Right cardiac atrium (tissue), 5 donors: ENCODE measurements at regions of chr11 and their contacts with region 1.

Region 1: DNA sequence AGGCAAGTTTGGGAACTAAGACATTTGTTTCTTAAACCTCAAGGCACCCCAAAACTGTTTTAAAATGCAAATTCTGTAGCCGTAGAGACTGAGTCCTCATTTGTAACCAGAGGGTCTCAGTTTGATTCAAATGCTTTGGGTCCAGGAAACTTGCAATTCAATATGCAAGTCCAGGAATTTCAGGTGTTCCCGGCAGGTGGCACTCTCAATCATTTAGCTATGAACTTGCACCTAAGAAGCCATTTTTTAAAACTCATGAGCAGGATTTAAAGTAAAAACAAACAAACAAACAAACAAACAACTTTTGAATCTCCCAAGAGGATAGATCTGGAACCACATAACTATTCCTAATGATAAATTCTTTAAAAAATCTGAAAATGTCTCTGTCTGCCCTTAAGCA is 8.7 kb upstream of the ABTB2 start:
- DNase-seq: peak in 1 of 3 donors; percentile 26
- ATAC-seq: no peak
- H3K4me3 ChIP-seq: no peak overlapping the region
- H3K27ac ChIP-seq: no peak overlapping the region
- H3K4me1 ChIP-seq: no peaks in the 10 kb centered on the region
- H3K27me3 ChIP-seq: no peaks in the 10 kb centered on the region

Region 2: GRCh38 chr11:33857933-33858371 is 508.6 kb before region 1 on chr11:
- intact Hi-C with region 1: loop called in 1 of 4 experiments (anchors 10 kb)
- DNase-seq: peak; percentile 74 to 89 (median 87)
- ATAC-seq: peak; percentile 88 to 91
- H3K4me3 ChIP-seq: no peak overlapping the region
- H3K27ac ChIP-seq: no peak overlapping the region
- H3K4me1 ChIP-seq: no peaks in the 10 kb centered on the region
- H3K27me3 ChIP-seq: no peaks in the 10 kb centered on the region

Region 3: GRCh38 chr11:33996498-33997454 is 369.7 kb before region 1 on chr11:
- intact Hi-C with region 1: loop called in 1 of 4 experiments (anchors 5 kb)
- DNase-seq: peak; percentile 50 to 71 (median 53)
- ATAC-seq: peak; percentile 94 to 96
- H3K4me3 ChIP-seq: no peak overlapping the region
- H3K27ac ChIP-seq: no peak overlapping the region
- H3K4me1 ChIP-seq: peaks cover 2% of the 10 kb centered on the region
- H3K27me3 ChIP-seq: no peaks in the 10 kb centered on the region

Region 4: DNA sequence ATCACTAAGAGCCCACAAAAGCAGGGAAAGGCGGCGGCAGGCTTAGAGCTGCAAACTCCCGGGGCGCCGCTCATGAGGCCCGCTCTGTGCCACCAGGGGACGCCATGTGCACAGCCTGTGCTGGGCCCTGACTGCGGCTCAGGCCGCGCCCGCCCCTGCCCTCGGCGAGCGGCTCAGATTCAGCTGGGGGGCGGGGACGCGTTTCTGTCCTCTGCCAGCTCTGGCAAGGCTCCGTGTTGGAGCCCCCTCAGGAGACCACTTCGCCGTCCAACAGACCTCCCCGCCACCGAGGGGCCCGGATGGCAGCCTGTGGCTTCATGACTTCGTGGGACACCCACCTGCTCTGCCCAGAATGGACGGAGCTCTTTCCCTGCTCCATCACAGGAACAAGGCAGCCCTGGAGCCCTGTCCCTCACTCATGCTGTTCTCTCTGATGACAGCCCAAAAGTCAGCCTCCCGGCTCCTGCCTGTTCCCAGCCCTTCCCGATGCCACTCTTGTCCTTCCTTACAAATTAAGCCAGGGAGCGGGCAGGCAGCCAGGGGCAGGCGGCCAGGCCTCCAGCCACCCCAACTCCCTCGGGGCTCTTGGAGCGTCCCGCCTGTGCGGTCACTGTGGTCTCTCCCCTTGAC is 192.0 kb before region 1 on chr11:
- intact Hi-C with region 1: loop called in 1 of 4 experiments (anchors 5 kb)
- DNase-seq: peak; percentile 87 to 96 (median 95)
- ATAC-seq: peak; percentile 97 to 98
- H3K4me3 ChIP-seq: no peak overlapping the region
- H3K27ac ChIP-seq: no peak overlapping the region
- H3K4me1 ChIP-seq: peaks cover 6% of the 10 kb centered on the region
- H3K27me3 ChIP-seq: no peaks in the 10 kb centered on the region

Region 5: GRCh38 chr11:34234086-34234740 is 132.3 kb before region 1 on chr11:
- intact Hi-C with region 1: no loop called
- DNase-seq: peak in 1 of 3 donors; percentile 20
- ATAC-seq: peak; percentile 50 to 57
- H3K4me3 ChIP-seq: no peak overlapping the region
- H3K27ac ChIP-seq: no peak overlapping the region
- H3K4me1 ChIP-seq: no peaks in the 10 kb centered on the region
- H3K27me3 ChIP-seq: no peaks in the 10 kb centered on the region

Region 6: DNA sequence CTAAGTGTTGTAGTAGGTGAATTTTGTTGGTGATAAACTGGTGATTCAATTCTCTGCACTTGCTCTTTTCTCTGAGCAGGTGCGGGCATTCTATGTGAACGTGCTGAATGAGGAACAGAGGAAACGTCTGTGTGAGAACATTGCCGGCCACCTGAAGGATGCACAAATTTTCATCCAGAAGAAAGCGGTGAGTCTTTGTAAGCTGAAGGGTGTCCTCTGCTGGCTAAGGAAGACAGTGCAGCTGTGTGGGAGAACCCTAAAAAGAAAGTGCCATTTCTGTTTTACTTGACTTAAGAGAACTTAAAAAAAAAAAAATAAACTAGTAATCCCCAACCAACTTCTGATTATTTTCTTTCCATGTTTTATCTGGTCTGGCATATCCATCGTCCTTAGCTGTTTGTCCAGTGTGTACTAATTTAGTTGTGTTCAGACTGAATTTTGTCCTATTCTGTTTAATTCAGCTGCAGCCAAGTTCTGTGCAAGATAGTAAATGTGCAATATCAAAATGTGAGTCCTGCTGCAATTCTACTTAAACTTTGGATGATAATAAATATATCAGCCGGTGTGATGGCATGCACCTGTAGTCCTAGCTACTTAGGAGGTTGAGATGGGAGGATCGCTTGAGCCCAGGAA is 101.8 kb after region 1 on chr11:
- intact Hi-C with region 1: no loop called
- DNase-seq: no peak
- ATAC-seq: no peak
- H3K4me3 ChIP-seq: no peak overlapping the region
- H3K27ac ChIP-seq: no peak overlapping the region
- H3K4me1 ChIP-seq: no peaks in the 10 kb centered on the region
- H3K27me3 ChIP-seq: no peaks in the 10 kb centered on the region

Region 7: DNA sequence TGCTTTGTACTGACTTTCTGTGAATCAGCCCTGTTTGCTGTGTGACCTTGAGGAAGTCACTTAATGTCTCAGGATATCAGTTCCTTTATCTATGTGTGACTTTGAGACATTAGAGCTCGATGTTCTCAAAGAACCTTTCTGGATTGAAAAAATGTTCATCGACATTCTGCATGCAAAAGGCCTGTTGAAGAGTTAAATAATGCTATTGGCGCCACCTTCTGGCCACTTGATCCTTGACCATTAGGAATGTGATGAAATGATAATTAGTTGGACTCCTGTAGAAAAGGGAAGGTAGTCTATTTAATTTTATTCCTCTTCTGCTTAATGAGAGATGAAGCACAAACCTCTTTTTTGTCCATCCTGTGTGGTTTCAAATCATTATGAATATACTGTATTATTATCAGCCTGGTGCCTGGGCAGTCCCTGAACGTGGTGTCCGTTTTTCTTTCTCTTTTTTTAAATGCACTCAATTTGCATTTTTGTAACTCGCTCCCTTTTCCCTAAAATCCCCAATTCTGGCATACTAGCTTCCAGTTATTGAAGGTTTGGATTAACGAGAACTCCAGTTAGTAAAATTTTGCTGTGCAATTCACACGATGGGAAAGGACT is 126.4 kb after region 1 on chr11:
- intact Hi-C with region 1: loop called in 1 of 4 experiments (anchors 5 kb)
- DNase-seq: peak in 2 of 3 donors; percentile 57 to 86
- ATAC-seq: no peak
- H3K4me3 ChIP-seq: no peak overlapping the region
- H3K27ac ChIP-seq: no peak overlapping the region
- H3K4me1 ChIP-seq: no peaks in the 10 kb centered on the region
- H3K27me3 ChIP-seq: no peaks in the 10 kb centered on the region